CD4-positive, alpha-beta T cell (primary cell): ENCODE measurements at regions of chr16 and their contacts with region 1.

Region 1: DNA sequence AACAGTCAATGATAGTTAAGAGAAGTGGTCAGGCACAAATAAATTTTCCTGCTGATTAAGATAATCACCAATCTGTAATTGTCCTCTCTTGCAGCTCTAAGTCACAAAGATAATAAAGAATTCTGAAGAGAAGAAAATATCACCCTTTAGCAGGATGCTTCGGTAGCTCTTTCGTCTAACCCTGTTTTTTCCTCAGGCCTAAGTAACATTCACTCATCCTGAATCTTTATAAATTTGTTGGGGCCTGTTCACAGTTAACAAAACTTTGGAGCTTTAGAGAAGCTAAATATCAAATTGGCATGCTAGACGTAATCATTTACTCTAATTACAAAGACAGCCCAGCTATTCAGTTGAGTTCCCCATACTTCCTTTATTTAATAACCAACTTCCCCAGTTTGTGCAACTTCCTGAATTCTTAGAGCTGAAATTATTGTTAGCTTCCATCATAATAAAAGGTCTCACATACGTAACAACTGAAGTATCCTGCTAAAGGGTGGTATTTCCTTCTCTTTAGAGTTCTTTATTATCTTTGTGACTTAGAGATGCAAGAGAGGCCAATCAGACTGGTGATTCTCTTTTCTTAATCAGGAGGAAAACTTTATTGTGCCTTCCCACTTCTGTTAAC is 118.6 kb downstream of the TANGO6 start:
- DNase-seq: peak in 3 of 14 experiments; percentile 7 to 28 (median 23)
- ATAC-seq: no peak
- H3K4me3 ChIP-seq: no peak overlapping the region
- H3K4me3 Mint-ChIP-seq: no peak overlapping the region
- H3K27ac ChIP-seq: no peak overlapping the region
- H3K27ac Mint-ChIP-seq: no peak overlapping the region
- H3K4me1 ChIP-seq: no peaks in the 10 kb centered on the region
- H3K4me1 Mint-ChIP-seq: peaks cover 5% of the 10 kb centered on the region
- H3K27me3 ChIP-seq: no peaks in the 10 kb centered on the region
- H3K27me3 Mint-ChIP-seq: no peaks in the 10 kb centered on the region
- CTCF ChIP-seq: no peak

Region 2: DNA sequence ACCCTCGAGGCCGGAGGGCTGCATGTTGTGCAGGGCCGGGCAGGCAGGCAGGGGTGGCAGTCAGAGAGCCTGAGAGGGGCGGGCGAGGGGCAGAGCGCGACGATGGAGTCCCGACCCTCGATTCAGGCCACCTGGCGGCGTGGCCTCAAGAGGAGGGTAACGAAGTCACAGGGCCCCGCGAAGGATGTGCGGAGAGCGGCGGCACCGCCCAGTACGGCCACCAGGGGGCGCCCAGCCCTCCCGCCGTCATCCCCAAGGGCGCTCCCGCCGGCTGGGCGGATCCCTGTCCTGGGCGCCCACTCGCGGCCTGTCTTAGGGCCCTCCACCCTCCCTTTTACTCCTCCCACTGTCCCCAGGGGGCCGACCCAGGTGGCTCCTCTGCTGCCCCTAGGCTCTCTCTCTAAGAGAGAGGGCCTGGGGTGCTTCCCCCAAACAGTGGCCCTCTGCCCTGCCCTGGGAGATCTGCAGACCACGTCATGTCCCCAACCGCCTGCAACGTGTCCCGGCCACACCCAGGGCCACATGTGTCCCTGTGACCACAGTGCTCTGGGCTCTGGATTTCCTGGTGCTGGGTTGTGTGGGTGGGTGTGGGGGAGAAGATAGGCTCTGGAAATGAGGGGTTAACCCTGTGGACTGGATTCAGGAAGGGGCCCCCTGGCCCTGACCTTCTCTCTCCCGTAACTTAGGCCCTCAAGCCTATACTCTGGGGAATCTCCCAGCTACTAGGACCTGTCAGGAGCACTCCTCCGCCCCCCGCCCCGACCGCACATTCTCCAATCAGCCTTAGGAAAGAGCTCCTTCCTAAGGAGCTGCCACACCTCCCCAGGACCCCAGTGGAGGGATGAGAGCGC is 968.5 kb before region 1 on chr16:
- CTCF ChIA-PET with region 1: no interaction called
- POLR2A ChIA-PET with region 1: no interaction called
- intact Hi-C with region 1: no loop called
- DNase-seq: peak; percentile 69 to 93 (median 78)
- ATAC-seq: peak; percentile 91
- H3K4me3 ChIP-seq: peak overlapping the region; percentile 63
- H3K4me3 Mint-ChIP-seq: peak overlapping the region; percentile 89
- H3K27ac ChIP-seq: peak overlapping the region; percentile 76 to 90
- H3K27ac Mint-ChIP-seq: peak overlapping the region; percentile 93
- H3K4me1 ChIP-seq: peaks cover 55% of the 10 kb centered on the region
- H3K4me1 Mint-ChIP-seq: peaks cover 36% of the 10 kb centered on the region
- H3K27me3 ChIP-seq: no peaks in the 10 kb centered on the region
- H3K27me3 Mint-ChIP-seq: no peaks in the 10 kb centered on the region
- CTCF ChIP-seq: peak; percentile 92

Region 3: GRCh38 chr16:68884861-68885720 is 76.8 kb before region 1 on chr16:
- CTCF ChIA-PET with region 1: no interaction called
- POLR2A ChIA-PET with region 1: no interaction called
- intact Hi-C with region 1: no loop called
- DNase-seq: no peak
- ATAC-seq: no peak
- H3K4me3 ChIP-seq: no peak overlapping the region
- H3K4me3 Mint-ChIP-seq: no peak overlapping the region
- H3K27ac ChIP-seq: no peak overlapping the region
- H3K27ac Mint-ChIP-seq: no peak overlapping the region
- H3K4me1 ChIP-seq: no peaks in the 10 kb centered on the region
- H3K4me1 Mint-ChIP-seq: no peaks in the 10 kb centered on the region
- H3K27me3 ChIP-seq: no peaks in the 10 kb centered on the region
- H3K27me3 Mint-ChIP-seq: no peaks in the 10 kb centered on the region
- CTCF ChIP-seq: no peak

Region 4: GRCh38 chr16:68981971-68982370 is 20.1 kb after region 1 on chr16:
- CTCF ChIA-PET with region 1: no interaction called
- POLR2A ChIA-PET with region 1: no interaction called
- intact Hi-C with region 1: loop called in 1 of 2 experiments (anchors 2 kb)
- DNase-seq: no peak
- ATAC-seq: no peak
- H3K4me3 ChIP-seq: no peak overlapping the region
- H3K4me3 Mint-ChIP-seq: no peak overlapping the region
- H3K27ac ChIP-seq: no peak overlapping the region
- H3K27ac Mint-ChIP-seq: no peak overlapping the region
- H3K4me1 ChIP-seq: no peaks in the 10 kb centered on the region
- H3K4me1 Mint-ChIP-seq: no peaks in the 10 kb centered on the region
- H3K27me3 ChIP-seq: no peaks in the 10 kb centered on the region
- H3K27me3 Mint-ChIP-seq: no peaks in the 10 kb centered on the region
- CTCF ChIP-seq: no peak